ENCODE measurements at regions of chr5 and their contacts with region 1.

Region 1: GRCh38 chr5:111072949-111073682 is 1.6 kb downstream of the TSLP start:
- DNase-seq: peak; percentile 41
- H3K4me3 ChIP-seq: peak overlapping the region; percentile 64 to 93 (median 66)
- H3K27ac ChIP-seq: no peak overlapping the region
- H3K4me1 ChIP-seq: peaks cover 22% of the 10 kb centered on the region
- H3K27me3 ChIP-seq: peaks cover 4% of the 10 kb centered on the region
- CTCF ChIP-seq: peak in 1 of 2 donors; percentile 29

Region 2: DNA sequence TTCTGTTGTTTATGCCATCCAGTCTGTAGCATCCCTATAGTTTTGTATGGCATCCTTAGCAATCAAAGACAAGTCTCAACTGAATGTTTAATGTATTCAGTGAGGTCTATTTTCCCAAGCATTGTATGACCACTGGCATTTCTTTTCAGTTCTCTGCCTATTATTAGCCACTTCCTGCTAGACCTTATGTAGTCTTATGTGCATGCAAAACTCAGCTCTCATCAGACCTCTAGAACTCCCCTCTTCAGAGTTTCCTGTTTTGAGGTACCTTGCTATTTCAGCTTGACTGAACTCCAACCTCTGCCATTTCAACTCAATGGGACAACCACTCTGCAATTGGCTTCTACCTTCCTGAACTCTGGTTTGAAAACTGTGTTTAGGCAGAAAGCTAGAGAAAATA is 221.1 kb before region 1 on chr5:
- CTCF ChIA-PET with region 1: no interaction called
- dilution Hi-C with region 1: no loop called
- in situ Hi-C with region 1: no loop called
- intact Hi-C with region 1: no loop called
- DNase-seq: no peak
- H3K4me3 ChIP-seq: no peak overlapping the region
- H3K27ac ChIP-seq: no peak overlapping the region
- H3K4me1 ChIP-seq: peaks cover 13% of the 10 kb centered on the region
- H3K27me3 ChIP-seq: no peaks in the 10 kb centered on the region
- CTCF ChIP-seq: no peak

Region 3: GRCh38 chr5:110899566-110900412 is 173.3 kb before region 1 on chr5:
- CTCF ChIA-PET with region 1: no interaction called
- dilution Hi-C with region 1: no loop called
- in situ Hi-C with region 1: no loop called
- intact Hi-C with region 1: loop called (anchors 5 kb)
- DNase-seq: peak; percentile 65
- H3K4me3 ChIP-seq: no peak overlapping the region
- H3K27ac ChIP-seq: peak overlapping the region; percentile 40
- H3K4me1 ChIP-seq: peaks cover 19% of the 10 kb centered on the region
- H3K27me3 ChIP-seq: no peaks in the 10 kb centered on the region
- CTCF ChIP-seq: no peak

Region 4: GRCh38 chr5:111116550-111116949 is 43.4 kb after region 1 on chr5:
- CTCF ChIA-PET with region 1: no interaction called
- dilution Hi-C with region 1: no loop called
- in situ Hi-C with region 1: no loop called
- intact Hi-C with region 1: no loop called
- DNase-seq: no peak
- H3K4me3 ChIP-seq: no peak overlapping the region
- H3K27ac ChIP-seq: no peak overlapping the region
- H3K4me1 ChIP-seq: peaks cover 3% of the 10 kb centered on the region
- H3K27me3 ChIP-seq: no peaks in the 10 kb centered on the region
- CTCF ChIP-seq: no peak